ENCODE measurements at regions of chrX and their contacts with region 1.

Region 1: DNA sequence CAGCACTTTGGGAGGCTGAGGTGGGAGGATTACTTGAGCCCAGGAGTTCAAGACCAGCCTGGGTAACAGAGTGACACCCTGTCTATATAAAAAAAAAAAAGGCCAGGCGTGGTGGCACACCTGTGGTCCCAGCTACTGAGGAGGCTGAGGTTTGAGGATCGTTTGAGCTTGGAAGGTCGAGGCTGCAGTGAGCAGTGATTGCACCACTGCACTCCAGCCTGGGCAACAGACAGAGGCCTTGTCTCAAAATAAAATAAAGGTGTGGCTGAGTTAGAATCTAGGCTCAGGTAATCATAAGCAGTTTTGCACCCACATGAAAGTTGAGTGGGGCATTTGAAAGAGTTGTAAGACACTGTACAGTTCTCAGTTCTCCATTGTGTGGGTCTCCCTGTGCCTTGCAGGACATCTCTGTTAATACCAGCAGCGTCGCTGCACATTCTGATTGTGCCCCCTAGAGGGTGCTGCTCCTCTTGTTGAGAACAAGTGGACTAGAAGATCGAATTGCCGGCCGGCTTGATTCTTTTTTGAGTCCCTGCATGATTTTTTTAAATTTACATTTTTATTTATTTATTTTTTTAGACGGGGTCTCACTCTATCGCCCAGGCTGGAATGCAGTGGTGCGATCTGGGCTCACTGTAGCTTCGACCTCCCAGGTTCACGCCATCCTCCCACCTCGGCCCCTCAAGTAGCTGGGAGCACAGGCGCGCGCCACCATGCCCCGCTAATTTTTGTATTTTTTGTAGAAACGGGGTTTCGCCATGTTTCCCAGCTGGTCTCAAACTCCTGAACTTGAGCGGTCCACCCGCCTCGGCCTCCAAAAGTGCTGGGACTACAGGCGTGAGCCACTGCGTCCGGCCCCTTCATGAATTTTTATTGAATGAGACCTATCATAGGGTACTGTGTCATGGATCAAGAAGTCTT is 73.6 kb upstream of the RBMX start:
- DNase-seq: peak; percentile 23
- H3K4me3 ChIP-seq: no peak overlapping the region
- CTCF ChIP-seq: peak; percentile 68

Region 2: DNA sequence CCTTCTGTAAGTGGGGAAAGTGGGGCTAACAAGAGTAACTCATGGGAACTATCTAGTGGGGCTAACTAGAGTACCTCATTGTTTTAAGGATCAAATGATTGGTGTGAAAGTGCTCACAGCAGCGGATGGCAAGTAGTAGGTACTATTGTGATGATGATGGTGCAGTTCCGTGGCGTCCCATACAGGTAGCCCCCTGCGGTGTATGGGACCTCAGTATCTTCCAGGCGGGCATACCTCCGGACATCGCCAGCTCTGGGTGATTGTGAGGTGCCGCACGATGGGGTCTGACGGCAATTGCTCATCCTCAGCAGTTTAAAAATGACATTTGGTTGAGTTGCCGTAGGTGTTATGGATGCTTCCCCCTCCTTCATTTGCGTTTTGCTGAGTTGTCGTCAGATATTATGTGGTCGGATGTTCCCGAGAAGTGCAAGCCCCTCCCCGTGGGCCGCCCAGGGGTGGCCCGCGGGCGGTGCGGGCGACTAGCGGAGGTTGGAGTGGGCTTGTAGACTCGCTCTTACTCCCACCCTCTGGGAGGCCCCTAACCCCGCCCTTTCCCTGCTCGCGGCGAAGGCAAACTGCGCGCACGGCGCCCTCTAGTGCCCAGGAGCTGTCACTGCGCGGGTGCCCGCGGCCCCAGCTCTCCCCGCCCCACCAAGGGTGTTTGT is 98.0 kb after region 1 on chrX:
- CTCF ChIA-PET with region 1: interaction called, 11 read pairs
- POLR2A ChIA-PET with region 1: no interaction called
- DNase-seq: no peak
- H3K4me3 ChIP-seq: peak overlapping the region; percentile 47
- CTCF ChIP-seq: peak; percentile 92

Region 3: DNA sequence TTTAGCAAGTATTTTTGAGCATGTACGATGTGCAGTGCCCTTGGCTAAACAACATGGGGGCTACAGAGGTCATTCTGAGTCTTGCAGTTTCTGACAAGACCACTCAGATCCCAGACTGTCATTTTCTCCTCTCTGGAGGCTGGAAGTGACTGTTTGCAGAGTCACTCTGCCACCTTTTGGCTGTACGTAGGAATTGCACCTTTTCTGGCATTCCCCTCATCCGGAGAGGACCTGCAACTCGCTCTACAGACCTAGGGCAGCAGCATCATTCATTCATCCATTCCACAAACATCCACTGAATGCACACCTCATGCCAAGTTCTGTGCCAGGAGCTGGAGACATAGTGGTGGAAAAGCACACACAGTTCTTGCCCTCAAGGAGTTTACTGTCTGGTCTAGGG is 240.0 kb after region 1 on chrX:
- CTCF ChIA-PET with region 1: interaction called, 11 read pairs
- POLR2A ChIA-PET with region 1: no interaction called
- DNase-seq: no peak
- H3K4me3 ChIP-seq: no peak overlapping the region
- CTCF ChIP-seq: peak; percentile 58

Measured in AG04449 (cell line).